Dendritic cell treated with granulocyte-macrophage colony-stimulating factor and Interleukin-4, amounts not matched to agents 40 ng/mL and 50 ng/mL, for 4 days (primary cell): ENCODE measurements at regions of chr12 and their contacts with region 1.

Region 1: DNA sequence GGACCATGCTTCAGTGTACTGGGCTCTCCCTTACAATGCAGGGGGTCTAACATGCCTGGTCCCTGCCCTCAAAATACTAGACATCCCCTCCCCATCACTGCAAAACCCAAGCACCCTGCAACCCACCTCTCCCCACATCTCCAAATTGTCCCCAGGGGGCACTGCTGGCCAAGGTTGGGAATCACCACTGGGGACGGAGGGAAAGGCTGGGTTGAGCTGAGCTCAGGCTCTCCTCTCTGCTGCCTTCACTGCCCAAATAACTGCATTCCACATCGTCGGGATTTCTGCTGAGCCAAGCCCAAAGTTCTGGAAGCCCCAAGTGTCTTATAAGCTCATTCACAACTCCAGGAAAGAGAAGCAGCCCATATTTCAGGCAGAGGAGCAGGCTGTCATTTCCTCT is 69.6 kb downstream of the NT5DC3 start:
- H3K4me3 Mint-ChIP-seq: no peak overlapping the region
- H3K27ac Mint-ChIP-seq: no peak overlapping the region
- H3K4me1 Mint-ChIP-seq: peaks cover 10% of the 10 kb centered on the region
- H3K27me3 Mint-ChIP-seq: no peaks in the 10 kb centered on the region

Region 2: DNA sequence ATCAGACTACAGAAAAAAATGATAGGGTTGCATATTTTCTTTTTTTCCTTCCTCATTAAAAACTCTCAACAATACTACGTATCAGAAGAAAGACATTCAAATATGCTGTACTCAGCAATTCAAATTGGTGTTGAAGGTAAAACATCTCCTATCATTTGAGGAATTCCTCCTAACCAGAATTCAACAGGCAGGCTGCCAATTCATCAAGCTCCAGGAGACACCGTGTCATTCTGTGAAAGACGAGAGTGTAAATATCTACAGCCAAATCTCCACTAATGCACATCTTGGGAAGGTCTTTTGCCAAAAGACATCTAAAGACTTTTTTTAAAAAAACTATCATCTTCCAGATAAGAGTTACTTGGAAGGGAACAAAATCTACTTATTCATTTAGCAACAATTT is 43.0 kb after region 1 on chr12:
- intact Hi-C with region 1: no loop called
- H3K4me3 Mint-ChIP-seq: no peak overlapping the region
- H3K27ac Mint-ChIP-seq: peak overlapping the region; percentile 69
- H3K4me1 Mint-ChIP-seq: peaks cover 23% of the 10 kb centered on the region
- H3K27me3 Mint-ChIP-seq: no peaks in the 10 kb centered on the region

Region 3: DNA sequence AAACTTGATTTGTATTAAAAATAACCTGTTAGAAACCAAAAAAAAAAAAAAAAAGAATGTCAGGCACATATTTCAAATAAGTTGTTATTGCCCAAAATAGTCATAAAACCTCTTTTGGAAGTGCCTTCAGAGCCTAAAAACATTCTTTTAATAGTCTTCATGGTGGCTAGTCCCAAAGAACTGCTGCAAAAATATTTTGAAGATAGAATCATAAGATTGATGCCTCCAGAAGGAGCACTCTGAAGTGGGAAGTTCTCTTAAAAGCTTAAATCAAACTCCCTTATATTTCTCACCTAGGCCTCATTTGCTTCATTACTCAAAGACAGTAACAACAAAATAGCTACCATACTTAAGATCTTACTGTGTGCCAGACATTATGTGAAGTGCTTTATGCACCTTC is 96.7 kb after region 1 on chr12:
- intact Hi-C with region 1: loop called (anchors 1 kb)
- H3K4me3 Mint-ChIP-seq: no peak overlapping the region
- H3K27ac Mint-ChIP-seq: no peak overlapping the region
- H3K4me1 Mint-ChIP-seq: no peaks in the 10 kb centered on the region
- H3K27me3 Mint-ChIP-seq: no peaks in the 10 kb centered on the region